Naive thymus-derived CD4-positive, alpha-beta T cell (primary cell): ENCODE measurements at regions of chr6 and their contacts with region 1.

Region 1: GRCh38 chr6:127516666-127517273 is 2.4 kb downstream of the MTCL3 start:
- DNase-seq: peak in 5 of 9 donors; percentile 29 to 44 (median 34)
- ATAC-seq: peak; percentile 58
- H3K4me3 ChIP-seq: peak overlapping the region; percentile 58
- H3K4me3 Mint-ChIP-seq: peak overlapping the region; percentile 84 to 98 (median 88)
- H3K27ac ChIP-seq: no peak overlapping the region
- H3K27ac Mint-ChIP-seq: peak overlapping the region in 7 of 9 donors; percentile 18 to 85 (median 79)
- H3K4me1 ChIP-seq: peaks cover 15 to 17% of the 10 kb centered on the region in 2 donors
- H3K4me1 Mint-ChIP-seq: peaks cover 23 to 44% (median 32%) of the 10 kb centered on the region in 7 donors
- H3K27me3 ChIP-seq: peaks cover 0 to 21% of the 10 kb centered on the region in 2 donors
- H3K27me3 Mint-ChIP-seq: peaks cover 27 to 38% (median 37%) of the 10 kb centered on the region in 5 donors

Region 2: GRCh38 chr6:125749173-125749864 is 1767.5 kb before region 1 on chr6 and contains the start of gene HEY2:
- CTCF ChIA-PET with region 1: no interaction called
- POLR2A ChIA-PET with region 1: no interaction called
- intact Hi-C with region 1: loop called (anchors 5 kb)
- DNase-seq: peak; percentile 63 to 92 (median 69)
- ATAC-seq: peak; percentile 93
- H3K4me3 ChIP-seq: peak within 1 kb of the TSS; percentile 72
- H3K4me3 Mint-ChIP-seq: peak within 1 kb of the TSS; percentile 86 to 99 (median 93)
- H3K27ac ChIP-seq: peak within 1 kb of the TSS; percentile 45
- H3K27ac Mint-ChIP-seq: peak within 1 kb of the TSS in 8 of 9 donors; percentile 41 to 94 (median 68)
- H3K4me1 ChIP-seq: peaks cover 24 to 34% of the 10 kb centered on the region in 2 donors
- H3K4me1 Mint-ChIP-seq: peaks cover 26 to 50% (median 35%) of the 10 kb centered on the region in 7 donors
- H3K27me3 ChIP-seq: peaks cover 14 to 19% of the 10 kb centered on the region in 2 donors
- H3K27me3 Mint-ChIP-seq: peaks cover 19 to 82% (median 55%) of the 10 kb centered on the region in 5 donors
- total RNA-seq, gene HEY2: 0.34 to 0.46 (median 0.46) TPM in 3 of 5 experiments, not detected in the others

Region 3: GRCh38 chr6:125986300-125987025 is 1530.3 kb before region 1 on chr6 and contains the start of gene TRMT11:
- CTCF ChIA-PET with region 1: no interaction called
- POLR2A ChIA-PET with region 1: no interaction called
- intact Hi-C with region 1: loop called in 1 of 2 experiments (anchors 5 kb)
- DNase-seq: peak; percentile 58 to 80 (median 77)
- ATAC-seq: peak; percentile 95
- H3K4me3 ChIP-seq: peak within 1 kb of the TSS; percentile 89
- H3K4me3 Mint-ChIP-seq: peak within 1 kb of the TSS in 4 of 10 donors; percentile 12 to 40 (median 24)
- H3K27ac ChIP-seq: peak within 1 kb of the TSS; percentile 76
- H3K27ac Mint-ChIP-seq: no peak within 1 kb of the TSS
- H3K4me1 ChIP-seq: peaks cover 14 to 21% of the 10 kb centered on the region in 2 donors
- H3K4me1 Mint-ChIP-seq: peaks cover 0 to 19% (median 2%) of the 10 kb centered on the region in 7 donors
- H3K27me3 ChIP-seq: no peaks in the 10 kb centered on the region
- H3K27me3 Mint-ChIP-seq: no peaks in the 10 kb centered on the region
- total RNA-seq, gene TRMT11: 13.6 to 34.1 (median 20.1) TPM

Region 4: DNA sequence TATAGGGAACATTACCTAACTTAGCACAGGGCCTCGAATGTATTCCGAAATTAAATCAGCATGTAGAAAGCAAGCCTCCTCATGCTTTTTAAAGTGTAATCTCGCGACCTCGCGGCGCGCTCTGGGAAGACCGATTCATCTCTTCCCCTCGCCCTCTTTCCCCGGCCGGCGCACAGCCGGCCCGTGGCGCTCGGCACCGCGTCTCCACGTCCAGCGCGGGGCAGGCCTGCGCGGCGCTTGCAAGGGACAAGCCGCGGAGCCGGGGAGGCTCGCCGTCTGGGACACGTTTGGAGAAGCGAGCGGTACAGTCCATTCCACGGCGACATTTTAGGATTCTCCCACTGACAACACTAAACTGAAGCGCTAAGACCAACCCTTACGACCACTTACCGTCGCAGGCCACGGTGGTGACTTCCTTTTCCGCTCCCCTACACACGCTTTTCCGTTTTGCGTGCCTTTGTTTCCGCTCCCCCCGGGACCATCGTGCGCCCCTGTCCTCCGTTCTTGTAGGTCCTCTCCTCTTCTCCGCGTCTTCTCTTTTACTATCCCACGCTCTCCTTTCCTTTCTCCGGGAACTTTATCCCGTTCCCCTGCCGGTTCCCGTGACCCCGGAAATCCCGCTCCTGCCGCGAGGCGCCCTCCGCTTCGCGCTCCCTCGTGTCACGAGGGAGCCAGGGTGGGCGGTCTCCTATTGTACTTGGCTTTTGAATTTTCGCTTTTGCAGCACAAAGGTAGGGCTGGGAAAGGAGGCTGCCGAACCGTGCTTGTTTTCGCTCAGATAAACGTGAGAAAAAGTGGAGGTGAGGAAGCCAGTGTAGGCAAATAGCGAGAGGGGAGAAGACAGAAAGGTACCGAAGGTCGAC is 173.6 kb before region 1 on chr6 and contains the start of gene ECHDC1:
- CTCF ChIA-PET with region 1: no interaction called
- POLR2A ChIA-PET with region 1: no interaction called
- intact Hi-C with region 1: loop called (anchors 1 kb)
- DNase-seq: peak; percentile 45 to 76 (median 70)
- ATAC-seq: peak; percentile 87
- H3K4me3 ChIP-seq: peak within 1 kb of the TSS; percentile 83
- H3K4me3 Mint-ChIP-seq: no peak within 1 kb of the TSS
- H3K27ac ChIP-seq: peak within 1 kb of the TSS; percentile 91
- H3K27ac Mint-ChIP-seq: no peak within 1 kb of the TSS
- H3K4me1 ChIP-seq: peaks cover 34 to 39% of the 10 kb centered on the region in 2 donors
- H3K4me1 Mint-ChIP-seq: peaks cover 0 to 12% (median 9%) of the 10 kb centered on the region in 7 donors
- H3K27me3 ChIP-seq: no peaks in the 10 kb centered on the region
- H3K27me3 Mint-ChIP-seq: no peaks in the 10 kb centered on the region
- total RNA-seq, gene ECHDC1: 18.1 to 46.5 (median 34.3) TPM

Region 5: GRCh38 chr6:127484212-127484858 is 32.4 kb before region 1 on chr6:
- CTCF ChIA-PET with region 1: interaction called, 4 read pairs
- POLR2A ChIA-PET with region 1: interaction called, 4 read pairs
- intact Hi-C with region 1: loop called (anchors 1 kb)
- DNase-seq: peak in 7 of 9 donors; percentile 6 to 42 (median 20)
- ATAC-seq: peak; percentile 83
- H3K4me3 ChIP-seq: peak overlapping the region; percentile 38
- H3K4me3 Mint-ChIP-seq: peak overlapping the region; percentile 26 to 87 (median 82)
- H3K27ac ChIP-seq: peak overlapping the region; percentile 19
- H3K27ac Mint-ChIP-seq: peak overlapping the region; percentile 64 to 91 (median 78)
- H3K4me1 ChIP-seq: peaks cover 0 to 9% of the 10 kb centered on the region in 2 donors
- H3K4me1 Mint-ChIP-seq: peaks cover 16 to 41% (median 21%) of the 10 kb centered on the region in 7 donors
- H3K27me3 ChIP-seq: no peaks in the 10 kb centered on the region
- H3K27me3 Mint-ChIP-seq: no peaks in the 10 kb centered on the region

Region 6: DNA sequence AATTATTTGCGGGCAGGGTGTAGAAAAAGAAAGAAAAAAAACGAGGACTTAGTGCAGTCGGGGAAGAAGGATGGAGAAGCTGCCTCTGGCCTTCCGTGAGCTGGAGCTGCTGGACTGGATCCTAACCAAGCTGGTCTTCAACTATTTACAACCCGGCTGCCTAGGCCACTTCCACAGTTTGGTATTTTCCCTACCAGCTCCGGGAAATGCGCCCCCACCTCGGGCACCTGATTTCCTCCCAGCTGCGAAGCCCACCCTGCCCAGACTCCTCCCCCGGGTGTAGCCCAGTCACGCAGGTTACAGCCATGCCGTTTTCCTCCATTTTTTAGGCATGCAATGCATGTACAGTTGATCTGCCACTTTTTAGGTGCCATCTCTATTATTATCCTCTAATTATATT is 362.9 kb after region 1 on chr6:
- CTCF ChIA-PET with region 1: no interaction called
- POLR2A ChIA-PET with region 1: no interaction called
- intact Hi-C with region 1: loop called in 1 of 2 experiments (anchors 10 kb)
- DNase-seq: no peak
- ATAC-seq: no peak
- H3K4me3 ChIP-seq: no peak overlapping the region
- H3K4me3 Mint-ChIP-seq: peak overlapping the region; percentile 43 to 85 (median 73)
- H3K27ac ChIP-seq: no peak overlapping the region
- H3K27ac Mint-ChIP-seq: peak overlapping the region; percentile 6 to 90 (median 74)
- H3K4me1 ChIP-seq: peaks cover 54 to 58% of the 10 kb centered on the region in 2 donors
- H3K4me1 Mint-ChIP-seq: peaks cover 28 to 89% (median 75%) of the 10 kb centered on the region in 7 donors
- H3K27me3 ChIP-seq: no peaks in the 10 kb centered on the region
- H3K27me3 Mint-ChIP-seq: no peaks in the 10 kb centered on the region

Region 7: DNA sequence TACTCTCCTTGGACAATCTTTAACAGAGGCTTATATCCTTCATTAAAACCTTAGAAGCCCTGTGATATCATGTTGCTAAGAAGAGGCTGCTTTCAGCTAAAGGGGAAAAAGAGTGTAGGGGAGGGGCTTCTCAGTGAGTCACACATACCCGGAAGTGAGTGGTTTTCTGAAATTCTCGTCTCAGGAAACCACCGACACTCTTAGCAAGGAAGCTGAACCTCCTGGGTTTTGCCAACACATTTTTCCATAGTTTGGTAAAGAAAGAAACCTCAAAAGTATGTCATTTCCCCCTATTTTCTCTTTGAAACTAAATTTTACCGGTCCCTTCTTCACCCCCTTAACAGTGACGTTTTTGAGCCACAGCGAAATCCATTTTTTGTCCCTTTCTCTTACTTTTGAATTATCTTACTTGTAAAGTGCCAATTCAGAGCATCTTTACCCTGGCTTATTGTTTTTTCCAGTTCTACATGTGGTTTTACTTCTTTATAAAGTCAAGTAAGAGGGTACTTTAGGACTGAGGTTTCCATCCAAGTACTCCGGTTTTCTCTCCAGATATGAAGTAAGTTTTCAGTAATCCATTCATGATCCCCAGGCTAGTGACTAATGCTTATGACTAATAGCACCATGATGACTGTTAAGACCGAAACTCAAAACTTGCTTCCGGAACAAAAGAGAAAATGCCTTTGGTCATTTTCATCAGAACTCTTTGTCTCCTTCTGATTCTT is 1973.9 kb after region 1 on chr6:
- CTCF ChIA-PET with region 1: no interaction called
- POLR2A ChIA-PET with region 1: no interaction called
- intact Hi-C with region 1: loop called in 1 of 2 experiments (anchors 2 kb)
- DNase-seq: peak in 8 of 9 donors; percentile 53 to 89 (median 72)
- ATAC-seq: peak; percentile 96
- H3K4me3 ChIP-seq: peak overlapping the region; percentile 38
- H3K4me3 Mint-ChIP-seq: peak overlapping the region; percentile 61 to 90 (median 76)
- H3K27ac ChIP-seq: peak overlapping the region; percentile 73
- H3K27ac Mint-ChIP-seq: peak overlapping the region; percentile 84 to 97 (median 94)
- H3K4me1 ChIP-seq: peaks cover 15 to 21% of the 10 kb centered on the region in 2 donors
- H3K4me1 Mint-ChIP-seq: peaks cover 11 to 46% (median 32%) of the 10 kb centered on the region in 7 donors
- H3K27me3 ChIP-seq: no peaks in the 10 kb centered on the region
- H3K27me3 Mint-ChIP-seq: no peaks in the 10 kb centered on the region